ENCODE measurements at regions of chr6 and their contacts with region 1.

Region 1: DNA sequence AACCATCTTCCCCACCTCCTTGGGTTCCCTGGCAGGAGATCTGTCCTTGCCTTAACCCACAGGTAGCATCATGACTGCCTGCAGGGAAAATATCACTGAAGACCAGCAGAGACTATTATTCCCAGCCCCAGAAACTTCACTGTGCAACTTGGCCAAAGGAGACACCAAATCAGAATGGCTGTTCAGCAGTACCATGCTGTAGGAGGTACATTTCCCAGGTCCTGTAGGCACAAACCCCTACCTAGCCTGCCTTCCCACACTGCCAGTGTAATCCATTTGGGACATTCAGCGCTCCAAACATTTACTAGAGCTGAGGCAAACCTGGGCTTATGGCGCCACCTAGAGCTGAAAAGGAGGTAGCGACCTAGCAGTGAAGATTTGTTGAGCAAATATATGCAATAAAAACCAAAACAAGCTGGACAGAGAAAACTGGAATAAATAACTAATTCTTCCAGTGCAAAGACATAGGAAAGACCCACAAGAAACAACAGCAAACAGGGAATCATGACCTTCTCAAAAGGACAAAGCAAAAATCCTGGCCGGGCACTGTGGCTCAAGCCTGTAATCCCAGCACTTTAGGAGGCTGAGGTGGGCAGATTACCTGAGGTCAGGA is 60.3 kb downstream of the VTA1 start:
- DNase-seq: no peak
- H3K4me3 ChIP-seq: no peak overlapping the region
- H3K27ac ChIP-seq: no peak overlapping the region
- H3K4me1 ChIP-seq: no peaks in the 10 kb centered on the region
- H3K27me3 ChIP-seq: no peaks in the 10 kb centered on the region
- CTCF ChIP-seq: peak; percentile 55 to 77 (median 57)
- EP300 ChIP-seq: no peak
- POLR2A ChIP-seq: no peak

Region 2: GRCh38 chr6:142146828-142147662 is 60.3 kb before region 1 on chr6 and contains the starts of genes NMBR and VTA1:
- intact Hi-C with region 1: loop called (anchors 2 kb)
- DNase-seq: peak; percentile 96
- H3K4me3 ChIP-seq: peak within 1 kb of the TSS; percentile 69 to 84 (median 78)
- H3K27ac ChIP-seq: peak within 1 kb of the TSS; percentile 62 to 78 (median 72)
- H3K4me1 ChIP-seq: peaks cover 24 to 37% (median 29%) of the 10 kb centered on the region in 4 donors
- H3K27me3 ChIP-seq: no peaks in the 10 kb centered on the region
- CTCF ChIP-seq: peak; percentile 90 to 92 (median 90)
- EP300 ChIP-seq: no peak
- POLR2A ChIP-seq: no peak
- total RNA-seq, gene NMBR: not detected
- total RNA-seq, gene VTA1: 25.7 to 37.9 (median 28.2) TPM

Region 3: GRCh38 chr6:142313284-142313683 is 105.9 kb after region 1 on chr6:
- intact Hi-C with region 1: no loop called
- DNase-seq: no peak
- H3K4me3 ChIP-seq: no peak overlapping the region
- H3K27ac ChIP-seq: no peak overlapping the region
- H3K4me1 ChIP-seq: no peaks in the 10 kb centered on the region
- H3K27me3 ChIP-seq: no peaks in the 10 kb centered on the region
- CTCF ChIP-seq: no peak
- EP300 ChIP-seq: no peak
- POLR2A ChIP-seq: no peak